Activated naive CD4-positive, alpha-beta T cell treated with anti-CD3 and anti-CD28 coated beads, Interleukin-2, amount 10 ng/mL, durations not matched to agents 7 days and 5 days (primary cell): ENCODE measurements at regions of chr6 and their contacts with region 1.

Region 1: GRCh38 chr6:35624341-35625070 is 64.2 kb downstream of the FKBP5 start:
- DNase-seq: no peak
- H3K4me3 Mint-ChIP-seq: no peak overlapping the region
- H3K27ac Mint-ChIP-seq: peak overlapping the region; percentile 79
- H3K4me1 Mint-ChIP-seq: peaks cover 30% of the 10 kb centered on the region
- H3K27me3 Mint-ChIP-seq: no peaks in the 10 kb centered on the region

Region 2: DNA sequence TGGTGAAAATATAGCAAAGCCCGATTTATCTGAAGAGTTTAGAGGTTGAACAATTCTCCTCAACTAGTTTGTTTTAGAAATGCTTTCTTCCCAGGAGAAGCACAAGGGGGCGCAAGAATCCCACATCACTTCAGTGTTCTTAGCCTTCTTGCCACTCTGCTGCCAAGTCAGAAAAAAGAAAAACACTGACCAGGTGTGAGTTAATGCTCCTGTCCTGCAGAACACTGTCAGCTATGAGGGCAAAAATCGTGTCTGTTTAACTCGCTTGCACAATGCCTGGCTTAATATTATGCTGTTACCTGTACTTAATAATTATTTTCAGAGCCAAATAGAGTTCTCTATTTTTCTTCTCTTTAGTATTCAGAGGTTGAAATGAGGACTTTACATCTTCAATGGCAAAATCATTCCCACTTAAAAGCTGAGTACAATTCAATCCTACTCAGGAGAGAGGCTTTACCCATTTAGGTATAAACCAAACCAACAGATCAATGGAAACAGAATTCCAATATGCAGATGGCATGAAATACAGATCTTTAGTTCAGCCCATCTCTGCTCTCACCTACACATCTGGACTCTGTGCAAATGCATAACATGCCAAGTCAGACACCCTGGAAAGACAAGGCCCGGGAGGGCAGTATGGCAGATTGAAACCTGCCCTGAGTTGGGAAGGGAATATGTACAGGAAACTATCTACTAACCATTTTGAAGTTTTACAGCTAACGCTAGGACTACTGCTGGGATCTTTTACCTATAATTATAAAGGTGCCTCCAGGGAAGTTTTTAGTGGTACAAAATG is 40.4 kb before region 1 on chr6:
- CTCF ChIA-PET with region 1: interaction called, 25 read pairs
- DNase-seq: peak; percentile 85
- H3K4me3 Mint-ChIP-seq: no peak overlapping the region
- H3K27ac Mint-ChIP-seq: peak overlapping the region; percentile 78
- H3K4me1 Mint-ChIP-seq: peaks cover 47% of the 10 kb centered on the region
- H3K27me3 Mint-ChIP-seq: no peaks in the 10 kb centered on the region

Region 3: DNA sequence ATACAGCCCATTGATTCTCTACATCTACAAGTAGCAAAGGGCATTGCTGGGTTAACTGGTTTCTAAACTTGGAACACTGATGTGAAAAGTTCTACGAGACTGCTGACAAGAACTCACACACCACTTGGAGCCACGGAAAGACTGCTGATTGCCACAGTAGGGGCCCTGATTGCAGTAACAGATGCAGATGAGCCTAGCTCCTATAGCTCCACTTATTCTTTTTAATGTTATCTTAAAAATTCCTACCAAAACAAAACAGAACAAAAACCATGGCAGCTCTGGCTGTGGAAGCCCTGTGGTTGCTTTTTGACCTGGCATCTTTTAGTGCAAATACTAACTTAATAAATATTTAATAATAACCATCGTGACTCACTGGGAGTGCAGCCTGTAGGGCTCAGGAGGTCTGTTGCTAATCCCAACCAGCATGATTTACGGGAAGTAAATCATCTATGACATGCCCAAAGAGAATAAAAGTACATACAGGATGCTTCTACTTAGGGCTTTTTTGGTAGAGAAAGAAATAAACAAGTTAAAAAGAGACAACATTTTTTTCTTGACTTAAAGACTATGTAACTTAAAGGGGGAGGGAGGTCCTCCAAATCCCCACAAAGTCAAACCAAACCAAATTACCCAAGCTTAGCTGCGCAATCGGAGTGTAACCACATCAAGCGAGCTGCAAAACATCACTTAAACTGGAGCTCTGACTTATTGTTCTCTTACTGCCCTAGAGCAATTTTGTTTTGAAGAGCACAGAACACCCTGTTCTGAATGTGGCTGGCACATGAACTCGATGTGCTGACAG is 23.0 kb before region 1 on chr6:
- CTCF ChIA-PET with region 1: interaction called, 13 read pairs
- DNase-seq: peak; percentile 81
- H3K4me3 Mint-ChIP-seq: peak overlapping the region; percentile 77
- H3K27ac Mint-ChIP-seq: peak overlapping the region; percentile 99
- H3K4me1 Mint-ChIP-seq: peaks cover 77% of the 10 kb centered on the region
- H3K27me3 Mint-ChIP-seq: no peaks in the 10 kb centered on the region

Region 4: GRCh38 chr6:35668096-35668495 is 43.6 kb after region 1 on chr6:
- CTCF ChIA-PET with region 1: no interaction called
- DNase-seq: no peak
- H3K4me3 Mint-ChIP-seq: peak overlapping the region; percentile 70
- H3K27ac Mint-ChIP-seq: peak overlapping the region; percentile 95
- H3K4me1 Mint-ChIP-seq: peaks cover 58% of the 10 kb centered on the region
- H3K27me3 Mint-ChIP-seq: no peaks in the 10 kb centered on the region

Region 5: DNA sequence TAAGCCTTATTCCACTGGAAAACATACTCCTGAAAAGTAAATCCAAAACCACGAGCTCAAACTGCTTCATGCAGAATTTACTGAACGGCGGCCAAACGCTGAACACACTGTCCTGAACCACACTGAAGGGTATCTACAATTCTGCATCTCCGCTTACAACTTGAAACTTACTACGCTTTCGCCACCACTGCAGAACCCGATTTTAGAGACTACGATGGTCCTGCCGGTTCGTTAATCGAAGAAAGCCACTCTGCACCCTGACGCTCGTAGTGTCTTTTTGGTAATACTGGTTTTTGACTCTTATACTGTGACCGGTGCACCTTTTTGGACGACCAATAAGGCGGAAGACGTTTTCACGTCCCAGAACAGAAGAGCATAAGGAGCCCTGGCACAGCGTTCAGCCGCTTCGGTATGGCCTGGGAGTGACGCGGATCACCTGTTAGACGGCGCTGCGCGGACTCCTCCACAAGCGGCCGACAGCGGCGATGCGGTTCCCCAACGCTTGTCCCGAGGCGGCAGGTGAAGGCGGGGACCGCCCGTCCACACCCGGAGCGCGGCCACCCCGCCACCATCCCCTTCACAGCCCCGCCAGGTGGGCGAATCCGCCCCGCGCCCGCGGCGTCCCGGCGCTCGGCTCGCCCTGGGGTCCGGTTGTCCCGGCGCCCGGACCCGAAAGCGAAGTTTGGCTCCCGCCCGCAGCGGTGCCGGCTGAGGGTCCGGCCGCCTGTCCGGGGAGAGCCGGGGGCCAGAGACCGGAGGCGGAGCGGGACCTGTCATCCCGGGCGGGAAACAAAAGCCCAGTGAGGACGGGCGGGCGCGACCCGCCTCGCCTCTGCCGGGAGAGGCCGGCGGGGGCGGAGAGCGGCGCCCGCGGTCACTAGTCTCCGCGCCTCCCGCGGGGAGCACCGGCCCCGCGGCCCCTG is 63.4 kb after region 1 on chr6:
- CTCF ChIA-PET with region 1: interaction called, 12 read pairs
- DNase-seq: peak; percentile 75
- H3K4me3 Mint-ChIP-seq: peak overlapping the region; percentile 89
- H3K27ac Mint-ChIP-seq: peak overlapping the region; percentile 88
- H3K4me1 Mint-ChIP-seq: peaks cover 16% of the 10 kb centered on the region
- H3K27me3 Mint-ChIP-seq: no peaks in the 10 kb centered on the region